HepG2 (cell line): ENCODE measurements at regions of chr1 and their contacts with region 1.

Region 1: DNA sequence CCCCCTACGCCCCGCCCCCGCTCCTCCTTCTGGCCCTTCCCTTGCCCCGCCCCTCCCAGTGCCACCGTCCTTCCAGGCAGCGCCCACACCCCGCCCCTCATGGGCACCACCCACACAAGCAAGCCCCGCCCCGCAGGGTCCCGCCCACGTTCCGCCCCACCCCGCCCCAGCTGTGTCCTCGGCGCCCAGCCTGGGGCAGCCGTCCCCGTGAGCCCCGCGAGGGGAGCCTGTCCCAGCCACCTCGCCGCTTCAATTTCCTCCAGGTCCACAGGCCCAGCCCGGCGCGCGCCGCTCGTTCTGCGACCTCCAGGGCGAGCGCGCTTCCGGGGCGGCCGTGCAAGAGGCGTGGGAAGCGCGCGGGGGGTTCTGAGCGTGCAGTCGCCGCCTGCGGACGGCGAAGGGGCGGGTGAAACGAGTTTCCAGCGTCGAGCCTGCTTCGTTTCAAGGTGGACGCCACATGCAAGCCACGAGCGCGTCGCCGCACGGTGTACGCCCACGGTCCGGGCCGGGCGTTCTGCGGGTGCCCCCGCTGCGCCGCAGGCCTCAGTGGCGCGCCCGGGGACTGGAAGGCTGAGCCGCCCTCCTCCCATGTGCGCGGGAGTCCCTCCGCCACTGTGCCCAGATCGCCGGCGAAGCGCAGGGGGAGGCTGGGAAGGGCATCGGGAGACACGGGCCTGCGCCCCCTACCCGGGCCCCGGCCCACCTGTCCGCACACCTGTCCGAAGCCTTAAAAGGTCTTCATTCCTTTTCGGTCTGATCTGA is 10.8 kb upstream of the FAAP20 start:
- DNase-seq: peak; percentile 69
- ATAC-seq: peak; percentile 9
- H3K4me3 ChIP-seq: peak overlapping the region; percentile 17 to 76 (median 37); a peak in 5 of 6 replicates
- H3K27ac ChIP-seq: no peak overlapping the region
- H3K4me1 ChIP-seq: peaks cover 81% of the 10 kb centered on the region
- H3K27me3 ChIP-seq: peaks cover 0 to 20% of the 10 kb centered on the region in 2 experiments; a peak in 4 of 5 replicates
- CTCF ChIP-seq: no peak
- EP300 ChIP-seq: no peak
- POLR2A ChIP-seq: no peak
- RAD21 ChIP-seq: no peak

Region 2: GRCh38 chr1:2189459-2190425 is 15.6 kb before region 1 on chr1:
- CTCF ChIA-PET with region 1: no interaction called
- POLR2A ChIA-PET with region 1: interaction called, 18 read pairs
- in situ Hi-C with region 1: no loop called
- intact Hi-C with region 1: no loop called
- DNase-seq: peak; percentile 93
- ATAC-seq: peak; percentile 89
- H3K4me3 ChIP-seq: peak overlapping the region; percentile 56 to 78 (median 70); a peak in 5 of 6 replicates
- H3K27ac ChIP-seq: peak overlapping the region; percentile 75
- H3K4me1 ChIP-seq: peaks cover 41% of the 10 kb centered on the region
- H3K27me3 ChIP-seq: no peaks in the 10 kb centered on the region
- CTCF ChIP-seq: 0 out of 2 replicates have a peak, but pooled peaks have one; percentile 2
- EP300 ChIP-seq: no peak
- POLR2A ChIP-seq: peak in 1 of 2 experiments; percentile 55; a peak in 1 of 4 replicates
- RAD21 ChIP-seq: no peak

Region 3: DNA sequence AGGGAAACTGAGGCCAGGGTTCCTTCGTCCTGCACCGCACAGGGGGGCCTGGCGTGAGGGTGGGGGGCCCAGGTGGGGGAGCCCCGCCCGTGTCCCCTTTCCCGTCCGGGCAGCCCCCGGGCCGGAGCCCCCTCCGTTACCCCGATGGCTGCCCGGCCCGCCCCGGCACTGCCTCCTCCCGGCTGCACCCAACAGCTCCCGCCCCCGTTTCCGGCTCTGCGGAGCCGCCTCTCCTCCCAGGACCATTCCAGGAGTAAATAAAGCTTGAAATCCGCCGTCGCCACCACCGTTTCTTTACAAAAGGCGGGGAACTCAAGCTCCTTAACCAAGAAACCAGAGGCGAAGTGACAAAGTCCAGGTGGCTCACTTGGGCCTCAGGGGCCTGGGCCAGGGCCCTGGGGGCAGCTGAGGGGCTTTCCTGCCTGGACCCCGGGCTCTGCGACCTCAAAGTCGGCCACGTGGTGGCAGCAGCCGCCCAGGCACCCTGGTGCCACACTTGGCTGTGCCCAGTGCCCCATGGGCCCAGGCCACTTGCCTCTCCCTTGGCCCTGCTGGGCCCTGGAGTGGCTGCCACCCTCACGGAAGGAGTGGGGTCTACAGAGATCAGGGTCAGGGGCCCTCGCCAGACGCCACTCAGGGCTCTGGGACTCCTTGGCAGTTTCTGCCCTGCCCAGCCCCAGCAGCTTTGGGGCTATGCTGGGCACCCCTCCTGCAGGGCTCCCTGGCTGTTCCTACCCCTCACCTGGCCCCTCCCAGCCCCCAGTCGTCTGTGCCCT is 10.3 kb before region 1 on chr1:
- CTCF ChIA-PET with region 1: no interaction called
- POLR2A ChIA-PET with region 1: interaction called, 18 read pairs
- in situ Hi-C with region 1: no loop called
- intact Hi-C with region 1: no loop called
- DNase-seq: peak; percentile 84
- ATAC-seq: peak; percentile 76
- H3K4me3 ChIP-seq: peak overlapping the region; percentile 76 to 81 (median 80)
- H3K27ac ChIP-seq: peak overlapping the region; percentile 77
- H3K4me1 ChIP-seq: peaks cover 83% of the 10 kb centered on the region
- H3K27me3 ChIP-seq: no peaks in the 10 kb centered on the region
- CTCF ChIP-seq: peak; percentile 99
- EP300 ChIP-seq: 0 out of 4 replicates have a peak, but pooled peaks of 1 of the 2 experiments have one; percentile 26
- POLR2A ChIP-seq: no peak
- RAD21 ChIP-seq: peak; percentile 99

Region 4: DNA sequence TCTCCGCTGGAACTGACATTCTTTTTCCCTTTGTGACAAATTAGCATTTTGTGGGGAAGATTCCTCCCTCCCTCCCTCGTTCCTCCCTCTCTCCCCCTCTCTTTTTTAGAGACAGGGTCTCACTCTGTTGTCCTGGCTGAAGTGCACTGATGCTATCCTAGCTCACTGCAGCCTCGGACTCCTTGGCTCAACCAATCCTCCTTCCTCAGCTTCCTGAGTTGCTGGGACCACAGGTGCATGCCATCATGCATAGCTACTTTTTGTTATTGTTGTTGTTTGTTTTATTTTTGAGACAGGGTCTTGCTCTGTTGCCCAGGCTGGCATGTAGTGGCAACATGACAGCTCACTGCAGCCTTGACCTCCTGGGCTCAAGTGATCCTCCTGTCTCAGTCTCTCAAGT is 15.9 kb after region 1 on chr1:
- CTCF ChIA-PET with region 1: no interaction called
- POLR2A ChIA-PET with region 1: interaction called, 178 read pairs
- in situ Hi-C with region 1: no loop called
- intact Hi-C with region 1: no loop called
- DNase-seq: no peak
- ATAC-seq: no peak
- H3K4me3 ChIP-seq: no peak overlapping the region
- H3K27ac ChIP-seq: no peak overlapping the region
- H3K4me1 ChIP-seq: peaks cover 56% of the 10 kb centered on the region
- H3K27me3 ChIP-seq: peaks cover under 1 to 5% of the 10 kb centered on the region in 2 experiments; a peak in 1 of 5 replicates
- CTCF ChIP-seq: no peak
- EP300 ChIP-seq: no peak
- POLR2A ChIP-seq: no peak
- RAD21 ChIP-seq: no peak

Region 5: GRCh38 chr1:2227346-2228153 is 22.2 kb after region 1 on chr1:
- CTCF ChIA-PET with region 1: no interaction called
- POLR2A ChIA-PET with region 1: interaction called, 178 read pairs
- in situ Hi-C with region 1: no loop called
- intact Hi-C with region 1: loop called (anchors 2 kb)
- DNase-seq: peak; percentile 89
- ATAC-seq: peak; percentile 70
- H3K4me3 ChIP-seq: peak overlapping the region; percentile 65 to 96 (median 94)
- H3K27ac ChIP-seq: peak overlapping the region; percentile 88
- H3K4me1 ChIP-seq: peaks cover 26% of the 10 kb centered on the region
- H3K27me3 ChIP-seq: no peaks in the 10 kb centered on the region; a peak in 1 of 5 replicates
- CTCF ChIP-seq: no peak
- EP300 ChIP-seq: peak in 1 of 2 experiments; percentile 48; a peak in 1 of 4 replicates
- POLR2A ChIP-seq: no peak
- RAD21 ChIP-seq: peak; percentile 70

Region 6: DNA sequence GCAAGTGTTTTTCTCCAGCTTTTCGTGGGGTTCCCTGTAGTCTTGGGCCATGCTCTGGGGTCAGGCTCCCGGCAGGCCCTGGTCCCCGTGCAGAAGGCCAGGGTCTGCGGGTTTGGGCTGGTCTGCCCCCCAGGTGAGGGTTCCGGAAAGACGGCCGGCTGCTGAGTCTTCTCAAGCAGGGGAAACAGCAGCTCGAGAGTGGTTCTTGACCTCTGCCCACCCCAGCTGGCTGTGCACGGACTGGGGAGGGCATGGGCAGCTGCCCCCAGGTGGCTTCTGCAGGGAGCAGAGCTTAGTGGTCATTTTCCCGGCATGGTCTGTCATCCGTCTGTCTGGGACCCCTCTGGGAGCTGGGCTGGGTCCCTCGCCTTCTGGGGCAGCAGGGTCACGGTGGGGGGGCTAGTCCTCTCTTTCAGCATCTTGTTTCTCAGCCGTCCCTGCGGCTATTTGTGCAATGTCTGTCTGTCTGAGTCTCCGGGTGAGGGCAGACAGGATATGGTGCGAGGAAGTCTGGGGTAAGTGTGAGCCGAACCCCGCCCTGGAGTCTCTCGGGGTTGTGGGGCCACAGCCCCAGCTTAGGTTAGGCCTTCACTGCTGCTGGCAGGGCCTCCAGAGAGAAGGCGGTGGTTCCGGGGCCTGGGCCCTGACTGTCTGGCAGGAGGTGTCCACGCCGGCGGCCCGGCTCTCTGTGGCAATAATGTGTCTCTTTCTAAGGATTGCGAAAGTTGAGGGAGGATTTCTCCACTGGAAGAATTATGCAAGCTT is 28.8 kb after region 1 on chr1:
- CTCF ChIA-PET with region 1: interaction called, 3 read pairs
- POLR2A ChIA-PET with region 1: interaction called, 178 read pairs
- in situ Hi-C with region 1: no loop called
- intact Hi-C with region 1: loop called (anchors 2 kb)
- DNase-seq: peak; percentile 93
- ATAC-seq: peak; percentile 61
- H3K4me3 ChIP-seq: peak overlapping the region; percentile 74 to 96 (median 95)
- H3K27ac ChIP-seq: peak overlapping the region; percentile 81
- H3K4me1 ChIP-seq: peaks cover 69% of the 10 kb centered on the region
- H3K27me3 ChIP-seq: no peaks in the 10 kb centered on the region; a peak in 1 of 5 replicates
- CTCF ChIP-seq: peak; percentile 26; the same call in 1 of the 2 replicates
- EP300 ChIP-seq: peak; percentile 88 to 92
- POLR2A ChIP-seq: no peak
- RAD21 ChIP-seq: no peak

Region 7: GRCh38 chr1:2255420-2256369 is 50.3 kb after region 1 on chr1:
- CTCF ChIA-PET with region 1: no interaction called
- POLR2A ChIA-PET with region 1: no interaction called
- in situ Hi-C with region 1: no loop called
- intact Hi-C with region 1: no loop called
- DNase-seq: peak; percentile 52
- ATAC-seq: no peak
- H3K4me3 ChIP-seq: no peak overlapping the region
- H3K27ac ChIP-seq: peak overlapping the region; percentile 51
- H3K4me1 ChIP-seq: peaks cover 82% of the 10 kb centered on the region
- H3K27me3 ChIP-seq: no peaks in the 10 kb centered on the region
- CTCF ChIP-seq: no peak
- EP300 ChIP-seq: no peak
- POLR2A ChIP-seq: no peak
- RAD21 ChIP-seq: no peak

Region 8: DNA sequence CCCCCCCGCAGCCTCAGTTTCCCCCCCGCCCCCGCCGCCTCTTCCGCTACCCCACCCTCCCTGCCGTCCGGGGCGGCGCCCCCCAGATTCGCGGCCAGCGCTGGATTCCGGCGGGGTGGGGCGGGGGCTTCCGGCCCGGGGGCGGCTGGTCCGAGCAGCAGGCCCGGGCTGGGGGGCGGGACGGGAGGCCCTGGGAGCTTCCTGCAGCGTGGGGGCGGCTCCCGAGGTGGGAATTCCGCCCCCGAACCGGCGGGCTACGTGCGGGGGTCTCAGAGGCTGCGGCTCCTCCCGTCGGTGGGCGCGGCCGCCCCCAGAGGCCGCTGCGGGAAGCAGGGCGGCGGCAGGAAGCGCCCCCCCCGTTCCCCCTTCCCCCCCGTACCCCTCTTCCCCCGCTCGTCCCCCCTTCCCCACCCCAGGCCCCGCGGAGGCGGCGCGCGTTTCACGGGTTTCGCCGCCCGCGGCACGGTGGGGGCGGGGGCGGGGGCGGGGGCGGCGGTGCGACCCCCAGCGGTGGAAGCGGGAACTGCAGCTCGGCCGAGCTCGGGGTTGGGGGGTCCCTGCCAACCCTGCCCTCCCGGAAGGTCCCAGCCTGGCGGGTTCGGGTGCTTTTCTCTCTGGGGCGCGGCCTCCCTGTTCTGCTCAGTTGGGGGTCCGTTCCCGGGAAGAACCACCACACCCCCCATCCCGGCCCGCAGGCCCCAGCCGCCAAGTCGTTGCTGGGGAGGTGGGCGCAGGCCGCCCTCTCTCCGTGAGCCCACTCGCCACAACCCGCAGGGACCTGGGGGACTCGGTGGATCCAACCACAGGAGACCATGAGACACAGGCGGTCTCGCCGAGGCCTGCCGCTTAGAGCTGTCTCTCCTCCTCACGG is 109.7 kb after region 1 on chr1:
- CTCF ChIA-PET with region 1: no interaction called
- POLR2A ChIA-PET with region 1: interaction called, 10 read pairs
- in situ Hi-C with region 1: no loop called
- intact Hi-C with region 1: no loop called
- DNase-seq: peak; percentile 21
- ATAC-seq: no peak
- H3K4me3 ChIP-seq: peak overlapping the region; percentile 55 to 78 (median 64); a peak in 5 of 6 replicates
- H3K27ac ChIP-seq: no peak overlapping the region
- H3K4me1 ChIP-seq: peaks cover 79% of the 10 kb centered on the region
- H3K27me3 ChIP-seq: peaks cover 4 to 23% of the 10 kb centered on the region in 2 experiments; a peak in 3 of 5 replicates
- CTCF ChIP-seq: peak; percentile 65
- EP300 ChIP-seq: no peak
- POLR2A ChIP-seq: no peak
- RAD21 ChIP-seq: no peak